IMR-90 (cell line): ENCODE measurements at regions of chr17 and their contacts with region 1.

Region 1: GRCh38 chr17:56292010-56292409 is 138.7 kb downstream of the ANKFN1 start:
- DNase-seq: peak; percentile 77
- ATAC-seq: peak; percentile 70
- H3K4me3 ChIP-seq: no peak overlapping the region
- H3K27ac ChIP-seq: 0 out of 2 replicates have a peak overlapping the region, but pooled peaks have one; percentile 5
- H3K4me1 ChIP-seq: peaks cover 7% of the 10 kb centered on the region
- H3K27me3 ChIP-seq: no peaks in the 10 kb centered on the region
- CTCF ChIP-seq: no peak
- POLR2A ChIP-seq: no peak
- RAD21 ChIP-seq: no peak

Region 2: DNA sequence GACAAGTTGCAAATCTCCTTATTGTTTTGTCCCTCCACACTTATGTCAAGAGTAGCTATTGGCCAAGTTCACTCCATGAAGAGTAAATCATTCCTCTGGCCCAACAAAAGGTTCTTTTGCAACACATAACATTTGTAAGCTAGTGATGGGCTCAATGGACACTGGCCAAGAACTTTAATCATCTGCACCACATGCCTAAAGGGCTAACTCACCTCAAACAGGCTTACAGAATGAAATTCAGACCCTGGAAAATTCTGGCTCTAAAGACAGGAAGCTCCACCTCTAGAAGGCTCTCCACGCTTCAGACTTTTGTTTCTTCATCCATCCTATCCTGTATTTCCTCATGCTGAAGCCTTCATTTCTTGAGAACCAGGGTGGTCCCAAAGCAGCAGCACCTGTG is 149.7 kb before region 1 on chr17:
- CTCF ChIA-PET with region 1: no interaction called
- POLR2A ChIA-PET with region 1: no interaction called
- dilution Hi-C with region 1: no loop called
- in situ Hi-C with region 1: no loop called
- intact Hi-C with region 1: loop called (anchors 5 kb)
- DNase-seq: peak; percentile 95
- ATAC-seq: peak; percentile 84
- H3K4me3 ChIP-seq: no peak overlapping the region
- H3K27ac ChIP-seq: peak overlapping the region; percentile 85
- H3K4me1 ChIP-seq: peaks cover 9% of the 10 kb centered on the region
- H3K27me3 ChIP-seq: no peaks in the 10 kb centered on the region
- CTCF ChIP-seq: no peak
- POLR2A ChIP-seq: no peak
- RAD21 ChIP-seq: no peak

Region 3: DNA sequence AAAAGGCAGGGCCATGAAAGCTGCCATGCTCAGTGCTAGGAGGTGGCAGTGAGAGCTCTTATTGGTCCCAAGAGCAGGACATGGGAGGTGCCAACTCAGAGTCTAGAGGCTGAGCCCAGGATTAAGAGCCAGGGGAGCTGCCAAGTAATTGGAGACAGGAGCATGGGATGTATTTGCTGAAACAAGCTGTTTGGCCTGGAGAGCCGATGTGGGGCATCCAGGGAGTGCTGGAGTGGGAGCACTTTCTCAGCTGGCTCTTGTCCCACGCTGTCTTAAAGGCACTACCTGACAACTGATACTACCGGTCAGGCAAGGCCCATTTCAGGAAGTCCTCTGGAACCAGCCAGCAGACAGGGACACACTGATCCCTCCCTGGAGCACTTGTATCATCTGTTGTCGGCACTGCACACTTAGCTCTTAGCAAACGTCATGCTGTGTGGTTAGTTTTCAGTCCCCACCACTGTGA is 119.5 kb before region 1 on chr17:
- CTCF ChIA-PET with region 1: no interaction called
- POLR2A ChIA-PET with region 1: no interaction called
- dilution Hi-C with region 1: no loop called
- in situ Hi-C with region 1: no loop called
- intact Hi-C with region 1: no loop called
- DNase-seq: no peak
- ATAC-seq: peak; percentile 36
- H3K4me3 ChIP-seq: no peak overlapping the region
- H3K27ac ChIP-seq: peak overlapping the region; percentile 30
- H3K4me1 ChIP-seq: peaks cover 33% of the 10 kb centered on the region
- H3K27me3 ChIP-seq: no peaks in the 10 kb centered on the region
- CTCF ChIP-seq: no peak
- POLR2A ChIP-seq: no peak
- RAD21 ChIP-seq: no peak